Right ventricle myocardium superior (tissue), 1 donor: ENCODE measurements at regions of chr4 and their contacts with region 1.

Region 1: GRCh38 chr4:147590249-147590920 is 26.8 kb upstream of the TMEM184C start:
- DNase-seq: peak; percentile 47
- ATAC-seq: peak; percentile 79

Region 2: GRCh38 chr4:147029296-147029695 is 561.1 kb before region 1 on chr4:
- intact Hi-C with region 1: loop called (anchors 10 kb)
- DNase-seq: no peak
- ATAC-seq: no peak

Region 3: GRCh38 chr4:147111033-147111367 is 479.4 kb before region 1 on chr4:
- intact Hi-C with region 1: loop called (anchors 5 kb)
- DNase-seq: no peak
- ATAC-seq: no peak

Region 4: GRCh38 chr4:147160908-147161513 is 429.4 kb before region 1 on chr4:
- intact Hi-C with region 1: loop called (anchors 5 kb)
- DNase-seq: no peak
- ATAC-seq: peak; percentile 75

Region 5: DNA sequence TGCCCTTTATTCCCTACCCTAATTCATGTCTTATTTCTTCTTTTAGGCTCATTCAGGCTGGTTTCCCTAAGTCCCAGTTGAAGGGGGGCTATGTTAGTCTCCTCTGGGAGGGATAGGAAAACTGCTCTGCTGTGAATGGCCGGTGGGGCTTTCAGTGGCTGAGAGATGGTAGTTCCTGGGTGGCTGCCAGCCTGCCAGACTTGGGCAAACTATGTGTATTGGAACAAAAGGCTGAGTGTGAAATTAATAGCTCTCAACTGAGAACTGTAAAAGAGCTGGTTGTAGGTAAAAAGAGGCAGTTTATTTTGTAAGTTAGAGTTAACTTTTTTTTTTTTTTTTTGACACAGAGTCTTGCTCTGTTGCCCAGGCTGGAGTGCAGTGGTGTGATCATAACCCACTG is 170.3 kb after region 1 on chr4:
- intact Hi-C with region 1: no loop called
- DNase-seq: peak; percentile 74
- ATAC-seq: peak; percentile 37